ENCODE measurements at regions of chr1 and their contacts with region 1.

Region 1: DNA sequence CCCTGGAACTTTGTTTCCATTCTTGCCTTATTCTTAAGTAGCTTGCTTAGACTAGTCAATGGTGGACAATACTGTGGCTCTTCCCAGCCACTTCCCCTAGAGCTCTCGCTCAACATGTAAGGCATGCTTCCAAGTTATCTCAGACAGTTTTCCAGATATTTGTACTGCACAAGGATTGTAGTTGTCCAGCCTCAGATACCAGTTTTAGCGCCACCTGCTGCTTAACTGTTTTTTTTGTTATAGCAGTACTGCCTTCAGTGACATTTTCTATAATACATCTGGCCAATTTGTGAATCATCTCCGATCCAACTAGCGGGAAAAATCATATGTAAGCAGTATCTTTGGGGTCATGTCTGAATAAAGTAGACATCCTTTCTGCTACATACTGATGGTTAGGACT is 346.7 kb upstream of the ADGRL4 start:
- DNase-seq: peak; percentile 58
- H3K4me3 Mint-ChIP-seq: no peak overlapping the region
- H3K27ac Mint-ChIP-seq: no peak overlapping the region
- H3K4me1 Mint-ChIP-seq: peaks cover 23% of the 10 kb centered on the region
- H3K27me3 Mint-ChIP-seq: no peaks in the 10 kb centered on the region
- CTCF ChIP-seq: peak; percentile 45

Region 2: GRCh38 chr1:79259388-79260336 is 93.6 kb before region 1 on chr1:
- CTCF ChIA-PET with region 1: interaction called, 3 read pairs
- intact Hi-C with region 1: loop called (anchors 1 kb)
- DNase-seq: no peak
- H3K4me3 Mint-ChIP-seq: no peak overlapping the region
- H3K27ac Mint-ChIP-seq: no peak overlapping the region
- H3K4me1 Mint-ChIP-seq: peaks cover 9% of the 10 kb centered on the region
- H3K27me3 Mint-ChIP-seq: no peaks in the 10 kb centered on the region
- CTCF ChIP-seq: peak; percentile 20

Region 3: DNA sequence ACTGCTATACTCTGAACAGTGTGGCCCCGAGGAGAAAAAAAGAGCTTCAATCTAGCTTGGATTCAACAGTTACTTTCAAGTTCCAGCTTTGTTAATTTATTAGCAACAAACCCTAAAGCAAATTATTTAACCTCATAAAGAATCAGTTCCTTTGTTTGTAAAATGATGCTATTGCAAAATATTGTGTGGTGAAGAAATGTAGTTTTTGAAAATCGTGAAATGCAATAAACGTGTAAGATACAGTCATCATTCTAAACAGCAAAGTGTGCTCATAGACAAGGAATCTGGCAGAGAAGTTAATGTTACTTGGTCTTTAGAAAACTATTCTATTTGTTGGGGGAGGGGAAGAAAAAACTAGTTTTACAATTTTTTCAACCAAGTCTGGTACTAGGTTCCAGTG is 49.1 kb before region 1 on chr1:
- CTCF ChIA-PET with region 1: no interaction called
- intact Hi-C with region 1: loop called (anchors 1 kb)
- DNase-seq: no peak
- H3K4me3 Mint-ChIP-seq: no peak overlapping the region
- H3K27ac Mint-ChIP-seq: no peak overlapping the region
- H3K4me1 Mint-ChIP-seq: peaks cover 14% of the 10 kb centered on the region
- H3K27me3 Mint-ChIP-seq: no peaks in the 10 kb centered on the region
- CTCF ChIP-seq: no peak

Region 4: DNA sequence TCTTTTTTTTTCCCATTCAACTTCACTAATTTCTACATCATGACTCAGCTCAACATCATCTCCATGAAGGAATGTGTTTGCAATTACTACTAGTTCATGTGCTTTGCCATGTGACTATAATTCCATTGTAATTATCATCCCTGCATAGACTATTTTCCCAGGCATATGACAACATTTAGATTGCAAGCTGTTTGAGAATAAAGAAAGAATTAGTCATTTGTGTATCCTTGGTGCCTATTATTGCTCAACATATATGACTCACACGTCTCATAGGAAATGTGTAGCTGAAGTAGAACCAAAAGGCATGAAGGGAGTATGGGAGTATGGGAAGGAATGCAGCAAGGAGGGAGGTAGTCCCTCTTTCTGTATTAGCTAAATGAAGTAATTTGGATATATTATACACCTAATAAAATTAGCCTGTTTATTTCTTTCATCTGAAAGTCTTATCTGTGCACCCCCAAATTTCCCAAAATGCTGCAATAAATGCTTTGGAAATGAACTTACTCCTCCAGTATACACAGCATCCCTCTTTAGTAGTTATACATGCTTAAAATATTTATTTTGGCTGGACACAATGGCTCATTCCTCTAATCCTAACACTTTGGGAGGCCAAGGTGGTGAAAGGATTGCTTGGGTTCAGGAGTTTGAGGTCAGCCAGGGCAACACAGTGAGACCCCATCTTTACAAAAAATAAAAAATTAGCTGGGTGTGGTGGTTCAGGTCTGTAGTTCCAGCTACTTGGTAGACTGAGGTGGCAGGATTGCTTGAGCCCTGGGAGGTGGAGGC is 29.8 kb before region 1 on chr1:
- CTCF ChIA-PET with region 1: no interaction called
- intact Hi-C with region 1: loop called (anchors 2 kb)
- DNase-seq: peak; percentile 6
- H3K4me3 Mint-ChIP-seq: peak overlapping the region; percentile 4
- H3K27ac Mint-ChIP-seq: peak overlapping the region; percentile 89
- H3K4me1 Mint-ChIP-seq: peaks cover 25% of the 10 kb centered on the region
- H3K27me3 Mint-ChIP-seq: no peaks in the 10 kb centered on the region
- CTCF ChIP-seq: no peak

Region 5: DNA sequence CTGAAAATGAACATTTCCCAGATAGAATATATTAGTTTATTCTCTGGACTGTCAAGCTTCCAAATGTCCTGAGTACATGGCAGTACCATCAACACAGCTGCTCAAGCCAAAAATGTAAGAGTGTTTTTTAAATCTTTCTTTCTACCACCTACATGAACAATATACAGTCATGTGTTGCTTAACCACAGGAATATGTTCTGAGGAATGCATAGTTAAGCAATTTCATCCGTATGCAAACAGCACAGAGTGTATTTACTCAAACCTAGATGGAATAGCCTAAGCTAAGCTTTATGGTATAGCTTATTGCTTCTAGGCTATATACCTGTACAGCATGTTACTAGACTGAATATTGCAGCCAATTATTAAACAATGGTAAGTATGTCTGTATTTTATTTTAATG is 215.2 kb after region 1 on chr1:
- CTCF ChIA-PET with region 1: no interaction called
- intact Hi-C with region 1: no loop called
- DNase-seq: no peak
- H3K4me3 Mint-ChIP-seq: no peak overlapping the region
- H3K27ac Mint-ChIP-seq: no peak overlapping the region
- H3K4me1 Mint-ChIP-seq: no peaks in the 10 kb centered on the region
- H3K27me3 Mint-ChIP-seq: no peaks in the 10 kb centered on the region
- CTCF ChIP-seq: no peak

Measured in Calu3 (cell line).